Tibial artery (tissue), 4 donors: ENCODE measurements at regions of chr2 and their contacts with region 1.

Region 1: DNA sequence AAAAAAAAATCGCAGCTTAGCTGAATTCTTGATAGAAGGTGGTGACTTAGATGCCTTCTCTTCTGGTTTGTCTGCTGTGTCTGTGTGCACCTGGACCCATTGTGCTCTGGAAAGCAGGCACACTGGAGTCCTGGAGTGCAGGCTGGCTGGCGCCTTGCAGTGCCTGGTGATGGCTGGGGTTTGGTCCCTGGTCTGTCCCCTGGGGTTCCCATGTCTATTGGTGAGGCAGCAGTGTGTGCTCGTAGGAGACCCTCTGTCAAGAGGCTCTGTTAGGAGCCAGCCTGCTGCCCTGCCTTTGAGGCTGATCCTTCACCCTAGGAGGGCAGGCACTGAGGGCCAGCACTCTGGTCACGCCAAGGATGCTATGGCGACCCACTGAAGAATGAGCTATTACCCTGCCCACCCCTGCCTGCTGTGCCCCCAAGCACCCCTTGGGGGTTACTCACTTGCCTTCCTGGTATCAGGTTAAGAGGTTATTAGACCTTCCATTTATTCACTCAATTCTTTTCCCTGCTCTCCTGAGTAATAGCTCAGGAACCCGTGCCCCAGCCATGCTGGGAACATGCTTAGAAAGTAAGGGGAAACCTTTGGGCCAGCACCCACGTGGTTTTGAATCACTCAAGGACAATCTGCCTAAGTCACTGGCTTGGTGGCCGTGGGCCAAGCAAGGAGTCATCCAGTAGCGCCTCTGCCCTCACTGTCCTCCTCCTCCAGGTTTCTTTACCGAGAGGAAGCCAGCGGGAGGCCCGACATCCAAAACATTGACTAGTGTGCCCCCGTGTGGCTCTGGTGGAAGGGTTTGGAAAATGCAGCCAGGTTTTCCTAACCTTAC is 284.5 kb downstream of the PRKCE start:
- DNase-seq: peak; percentile 97 to 98
- H3K4me3 ChIP-seq: no peak overlapping the region
- H3K27ac ChIP-seq: peak overlapping the region; percentile 38 to 49
- H3K4me1 ChIP-seq: peaks cover 0 to 26% (median 19%) of the 10 kb centered on the region in 4 donors
- H3K27me3 ChIP-seq: no peaks in the 10 kb centered on the region
- CTCF ChIP-seq: peak; percentile 65 to 86

Region 2: DNA sequence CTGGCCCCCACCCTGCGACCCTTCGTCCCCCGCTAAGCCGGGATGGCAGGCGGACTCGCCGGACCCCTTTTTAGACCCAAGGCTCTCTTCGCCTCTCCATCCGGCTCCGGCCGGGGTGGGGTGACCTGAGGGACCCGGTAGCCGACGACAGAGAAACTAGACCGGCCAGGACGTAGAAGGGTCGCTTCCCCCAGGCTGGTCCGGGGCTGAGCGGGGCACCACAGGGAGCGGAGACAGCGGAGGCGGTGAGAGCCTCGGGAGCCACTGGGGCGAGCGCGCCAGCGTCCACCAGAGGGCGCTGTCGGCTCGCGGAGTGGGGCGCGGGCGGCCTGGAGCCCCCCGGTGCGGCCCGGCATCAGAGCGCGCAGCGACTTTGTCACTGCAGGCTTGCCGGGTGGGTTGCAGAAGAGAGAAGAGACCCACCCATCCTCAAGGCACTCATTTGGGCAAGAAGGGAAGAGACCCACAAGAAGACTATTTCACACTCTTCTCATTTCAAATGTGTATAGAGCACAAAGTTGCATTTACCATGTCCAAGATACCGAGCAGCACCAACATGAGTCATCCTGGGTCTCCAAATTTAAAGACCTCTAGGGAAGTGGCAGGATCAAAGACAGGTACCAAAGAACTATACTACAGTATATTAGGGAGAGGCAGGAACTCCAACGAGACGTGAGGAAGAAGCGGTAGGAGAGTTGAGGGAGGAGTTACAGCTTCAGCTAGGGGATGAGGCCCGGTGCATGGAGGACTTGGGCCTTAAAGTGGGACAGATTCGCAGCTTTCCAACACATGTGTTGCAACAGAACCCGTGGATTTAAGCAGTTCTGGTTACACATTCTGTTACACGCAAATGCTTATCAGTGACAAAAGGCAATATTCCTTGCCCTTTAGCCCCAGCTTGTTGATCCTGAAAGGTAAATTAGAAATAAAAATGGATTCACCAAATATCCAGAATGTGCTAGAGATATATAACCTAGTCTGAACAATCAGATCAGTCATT is 292.2 kb before region 1 on chr2:
- intact Hi-C with region 1: loop called (anchors 1 kb)
- DNase-seq: peak; percentile 31 to 77
- H3K4me3 ChIP-seq: peak overlapping the region; percentile 40 to 44
- H3K27ac ChIP-seq: no peak overlapping the region
- H3K4me1 ChIP-seq: peaks cover 0 to 20% (median 9%) of the 10 kb centered on the region in 4 donors
- H3K27me3 ChIP-seq: peaks cover 0 to 14% of the 10 kb centered on the region in 2 donors
- CTCF ChIP-seq: peak; percentile 96 to 98

Region 3: GRCh38 chr2:45778720-45779171 is 157.3 kb before region 1 on chr2:
- intact Hi-C with region 1: loop called (anchors 5 kb)
- DNase-seq: peak in 1 of 2 donors; percentile 65
- H3K4me3 ChIP-seq: no peak overlapping the region
- H3K27ac ChIP-seq: no peak overlapping the region
- H3K4me1 ChIP-seq: peaks cover 0 to 12% (median 2%) of the 10 kb centered on the region in 4 donors
- H3K27me3 ChIP-seq: no peaks in the 10 kb centered on the region
- CTCF ChIP-seq: peak; percentile 73 to 78

Region 4: GRCh38 chr2:46029332-46029811 is 93.4 kb after region 1 on chr2:
- intact Hi-C with region 1: no loop called
- DNase-seq: no peak
- H3K4me3 ChIP-seq: no peak overlapping the region
- H3K27ac ChIP-seq: no peak overlapping the region
- H3K4me1 ChIP-seq: peaks cover 0 to 38% (median 27%) of the 10 kb centered on the region in 4 donors
- H3K27me3 ChIP-seq: no peaks in the 10 kb centered on the region
- CTCF ChIP-seq: no peak

Region 5: DNA sequence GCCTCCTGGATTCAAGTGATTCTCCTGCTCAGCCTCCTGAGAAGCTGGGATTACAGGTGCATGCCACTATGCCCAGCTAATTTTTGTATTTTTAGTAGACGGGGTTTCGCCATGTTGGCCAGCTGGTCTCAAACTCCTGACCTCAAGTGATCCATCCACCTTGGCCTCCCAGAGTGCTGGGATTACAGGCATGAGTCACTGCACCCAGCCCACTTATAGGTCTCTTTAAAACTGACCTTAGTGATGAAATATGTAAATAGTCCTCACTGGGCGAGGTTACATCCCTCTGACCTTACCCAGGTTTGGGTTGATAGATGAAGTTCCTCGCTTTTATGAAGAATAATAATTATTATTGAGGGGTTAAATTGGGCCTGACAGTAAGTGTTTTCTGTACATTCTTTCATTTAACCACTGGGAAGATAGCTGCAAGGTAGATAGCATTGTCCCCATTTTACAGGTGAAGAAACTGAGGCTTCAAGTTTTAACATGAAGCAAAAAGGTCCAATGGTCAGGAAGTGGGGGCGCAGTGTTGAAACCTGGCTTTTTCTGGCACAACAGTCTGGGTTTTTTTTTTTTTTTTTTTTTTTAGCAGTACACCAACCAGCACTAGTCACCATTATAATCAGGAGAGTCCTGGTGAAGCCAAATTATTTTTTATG is 186.4 kb after region 1 on chr2:
- intact Hi-C with region 1: no loop called
- DNase-seq: no peak
- H3K4me3 ChIP-seq: no peak overlapping the region
- H3K27ac ChIP-seq: no peak overlapping the region
- H3K4me1 ChIP-seq: peaks cover 0 to 38% (median 11%) of the 10 kb centered on the region in 4 donors
- H3K27me3 ChIP-seq: no peaks in the 10 kb centered on the region
- CTCF ChIP-seq: no peak